Aorta (tissue), 5 donors: ENCODE measurements at regions of chr9 and their contacts with region 1.

Region 1: DNA sequence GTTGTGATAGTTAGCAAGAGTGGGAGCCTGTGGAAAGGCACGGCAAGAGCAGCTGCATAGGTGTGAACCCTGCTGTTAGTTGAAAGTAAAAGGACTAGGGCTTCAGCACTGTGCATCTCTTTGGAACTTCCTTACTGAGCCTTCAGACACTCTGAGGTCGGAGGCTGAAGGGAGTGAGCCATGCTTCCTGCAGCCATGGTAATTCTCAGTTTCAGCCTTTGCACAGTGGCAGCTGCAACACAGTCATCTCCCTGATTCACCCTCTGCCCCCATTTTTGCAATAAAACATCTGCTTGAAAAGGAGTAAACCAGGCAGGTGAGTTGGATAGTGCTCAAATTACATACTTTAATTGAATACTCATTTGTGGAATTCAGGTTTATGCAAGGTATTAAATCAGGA is 6.5 kb upstream of the TLE4 start:
- DNase-seq: no peak
- ATAC-seq: no peak
- H3K4me3 ChIP-seq: no peak overlapping the region
- H3K27ac ChIP-seq: no peak overlapping the region
- H3K4me1 ChIP-seq: no peaks in the 10 kb centered on the region
- H3K27me3 ChIP-seq: peaks cover 0 to 1% of the 10 kb centered on the region in 2 donors

Region 2: DNA sequence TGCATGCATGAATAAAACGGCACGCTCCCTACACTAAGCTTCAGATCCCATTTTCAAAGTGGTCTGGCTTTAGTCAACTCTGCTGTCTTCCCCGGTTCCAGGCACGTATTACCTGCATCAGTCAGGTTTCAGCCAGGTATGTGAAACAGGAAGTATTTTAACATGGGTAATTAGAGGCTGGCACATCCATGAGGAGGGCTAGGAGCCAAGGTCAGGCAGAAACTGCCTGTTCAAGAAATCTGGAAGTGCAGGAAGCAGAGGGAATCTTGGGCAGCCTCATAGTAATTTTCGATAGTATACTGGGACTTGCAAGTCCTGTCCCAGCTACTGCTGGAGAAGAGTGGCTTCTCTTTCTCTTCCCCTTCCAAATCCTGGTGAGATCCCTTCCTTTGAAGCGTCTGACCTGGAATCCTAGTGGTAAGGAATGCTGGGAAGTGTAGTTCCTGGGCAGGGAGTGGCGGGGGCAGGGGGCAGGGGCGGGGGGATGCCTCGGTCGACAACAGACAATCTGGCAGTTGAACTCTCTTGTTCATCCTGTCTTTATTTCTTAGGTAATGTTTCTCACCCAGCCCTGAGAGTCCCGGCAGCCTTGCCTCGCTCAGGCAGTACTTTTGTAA is 409.7 kb after region 1 on chr9:
- intact Hi-C with region 1: loop called in 1 of 2 experiments (anchors 5 kb)
- DNase-seq: no peak
- ATAC-seq: no peak
- H3K4me3 ChIP-seq: no peak overlapping the region
- H3K27ac ChIP-seq: no peak overlapping the region
- H3K4me1 ChIP-seq: no peaks in the 10 kb centered on the region
- H3K27me3 ChIP-seq: peaks cover 0 to 1% of the 10 kb centered on the region in 2 donors